HEK293 (cell line): ENCODE measurements at regions of chr11 and their contacts with region 1.

Region 1: DNA sequence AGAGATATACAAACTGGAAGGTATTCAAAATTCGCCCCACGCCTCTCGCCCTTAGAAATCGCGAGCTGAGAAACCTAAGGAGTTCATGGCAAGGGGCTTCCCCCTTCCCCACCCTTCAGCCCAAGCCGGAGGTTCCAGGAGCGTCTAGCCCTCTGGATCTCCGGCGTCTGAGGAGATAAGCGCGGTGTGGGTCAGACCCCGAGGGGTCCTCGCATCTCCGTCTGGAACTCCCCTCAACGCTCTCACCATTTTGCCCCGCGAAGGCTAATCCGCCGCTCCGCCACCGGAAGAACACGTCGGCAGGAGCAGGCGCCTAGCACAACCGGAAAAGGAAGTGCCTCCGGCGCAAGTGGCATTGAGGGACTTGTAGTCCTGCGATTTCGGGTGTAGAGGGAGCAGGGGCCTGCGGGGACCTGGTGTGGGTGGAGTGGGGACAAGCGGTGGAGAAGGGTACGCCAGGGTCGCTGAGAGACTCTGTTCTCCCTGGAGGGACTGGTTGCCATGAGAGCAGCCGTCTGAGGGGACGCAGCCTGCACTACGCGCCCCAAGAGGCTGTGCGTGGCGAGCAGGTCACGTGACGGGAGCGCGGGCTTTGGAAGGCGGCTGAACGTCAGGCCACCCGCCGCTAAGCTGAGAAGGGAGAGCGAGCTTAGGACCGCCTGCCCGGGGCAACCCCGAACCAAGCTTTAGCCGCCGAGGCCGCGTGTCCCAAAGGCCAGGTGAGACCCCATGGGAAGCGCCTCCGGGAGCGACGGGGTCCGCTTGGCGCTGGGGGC is at the starts of genes FEN1 and TMEM258:
- H3K4me3 ChIP-seq: peak within 1 kb of the TSS; percentile 87
- H3K27ac ChIP-seq: peak within 1 kb of the TSS; percentile 89
- H3K4me1 ChIP-seq: 0 out of 2 replicates have a peak, but pooled peaks cover 1% of the 10 kb centered on the region
- CTCF ChIP-seq: no peak

Region 2: DNA sequence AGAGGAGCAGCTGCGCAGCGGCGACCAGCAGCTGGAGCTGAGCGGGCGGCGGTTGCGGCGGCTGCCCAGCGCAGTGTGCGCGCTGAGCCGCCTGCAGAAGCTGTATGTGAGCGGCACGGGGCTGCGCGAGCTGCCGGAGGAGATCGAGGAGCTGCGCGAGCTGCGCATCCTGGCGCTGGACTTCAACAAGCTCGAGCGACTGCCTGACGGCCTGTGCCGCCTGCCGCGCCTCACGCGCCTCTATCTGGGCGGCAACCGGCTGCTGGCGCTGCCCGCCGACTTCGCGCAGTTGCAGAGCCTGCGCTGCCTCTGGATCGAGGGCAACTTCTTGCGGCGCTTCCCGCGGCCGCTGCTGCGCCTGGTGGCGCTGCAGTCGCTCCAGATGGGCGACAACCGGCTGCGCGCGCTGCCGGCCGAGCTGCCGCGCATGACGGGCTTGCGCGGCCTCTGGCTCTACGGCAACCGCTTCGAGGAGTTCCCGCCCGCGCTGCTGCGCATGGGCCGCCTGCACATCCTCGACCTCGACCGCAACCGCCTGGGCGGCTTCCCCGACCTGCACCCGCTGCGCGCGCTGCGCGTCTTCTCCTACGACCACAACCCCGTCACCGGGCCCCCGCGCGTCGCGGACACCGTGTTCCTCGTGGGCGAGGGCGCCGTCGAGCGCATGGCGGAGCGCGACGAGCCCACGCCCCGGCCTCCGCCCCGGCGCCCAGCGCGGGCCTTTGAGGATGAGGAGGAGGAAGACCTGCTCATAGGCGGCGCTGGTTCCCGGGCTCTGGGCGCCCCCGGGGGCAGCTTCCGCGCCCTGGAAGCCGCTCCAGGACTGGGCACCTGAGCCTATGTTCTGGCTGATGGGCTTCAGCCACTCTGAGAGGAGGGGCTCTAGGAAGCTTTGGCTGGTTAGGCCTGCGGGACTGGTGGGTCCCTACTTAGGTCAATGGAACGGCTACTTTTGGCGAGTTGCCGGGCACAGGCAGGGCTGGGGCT is 283.2 kb before region 1 on chr11:
- CTCF ChIA-PET with region 1: no interaction called
- POLR2A ChIA-PET with region 1: no interaction called
- H3K4me3 ChIP-seq: peak overlapping the region; percentile 26
- H3K27ac ChIP-seq: no peak overlapping the region
- H3K4me1 ChIP-seq: no peaks in the 10 kb centered on the region
- CTCF ChIP-seq: peak; percentile 83

Region 3: DNA sequence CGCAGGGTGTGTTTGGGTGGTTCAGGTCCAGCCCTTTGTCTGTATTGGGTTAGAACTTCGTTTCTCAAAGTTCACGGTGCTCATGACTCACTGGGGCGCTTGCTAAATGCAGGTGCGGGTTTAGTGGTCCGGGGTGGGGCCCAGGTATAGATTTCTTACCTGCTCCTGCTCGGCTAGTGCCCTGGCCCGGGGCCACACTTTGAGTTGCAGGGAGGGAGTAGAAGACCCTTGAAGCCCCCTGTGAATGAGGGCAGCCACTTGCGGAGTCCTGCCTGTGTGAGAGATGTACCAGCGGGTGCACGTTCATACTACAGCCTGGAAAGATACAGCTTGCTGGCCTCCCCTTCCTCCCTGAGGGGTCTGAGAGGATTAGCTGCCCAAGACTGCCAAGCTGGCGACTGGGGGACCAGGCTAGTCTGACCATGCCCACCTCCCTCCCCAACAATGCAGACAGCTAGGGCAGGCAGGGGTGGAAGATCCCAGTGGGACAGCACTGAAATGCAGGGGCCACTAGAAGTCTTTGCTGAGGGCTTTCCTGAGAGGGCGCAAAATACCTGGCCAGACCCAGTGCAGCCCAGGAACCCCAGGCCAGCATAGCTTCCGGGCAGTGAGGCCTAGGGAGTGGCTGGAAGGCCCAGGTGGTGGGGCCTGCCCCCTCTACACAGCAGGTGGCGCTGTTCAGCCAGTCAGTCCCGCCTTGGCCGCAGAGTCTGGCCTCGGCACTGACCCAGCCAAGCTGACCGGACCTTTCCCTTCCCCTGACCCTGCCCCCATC is 45.1 kb before region 1 on chr11:
- CTCF ChIA-PET with region 1: interaction called, 118 read pairs
- POLR2A ChIA-PET with region 1: interaction called, 8 read pairs
- H3K4me3 ChIP-seq: no peak overlapping the region
- H3K27ac ChIP-seq: no peak overlapping the region
- H3K4me1 ChIP-seq: no peaks in the 10 kb centered on the region
- CTCF ChIP-seq: peak; percentile 63

Region 4: DNA sequence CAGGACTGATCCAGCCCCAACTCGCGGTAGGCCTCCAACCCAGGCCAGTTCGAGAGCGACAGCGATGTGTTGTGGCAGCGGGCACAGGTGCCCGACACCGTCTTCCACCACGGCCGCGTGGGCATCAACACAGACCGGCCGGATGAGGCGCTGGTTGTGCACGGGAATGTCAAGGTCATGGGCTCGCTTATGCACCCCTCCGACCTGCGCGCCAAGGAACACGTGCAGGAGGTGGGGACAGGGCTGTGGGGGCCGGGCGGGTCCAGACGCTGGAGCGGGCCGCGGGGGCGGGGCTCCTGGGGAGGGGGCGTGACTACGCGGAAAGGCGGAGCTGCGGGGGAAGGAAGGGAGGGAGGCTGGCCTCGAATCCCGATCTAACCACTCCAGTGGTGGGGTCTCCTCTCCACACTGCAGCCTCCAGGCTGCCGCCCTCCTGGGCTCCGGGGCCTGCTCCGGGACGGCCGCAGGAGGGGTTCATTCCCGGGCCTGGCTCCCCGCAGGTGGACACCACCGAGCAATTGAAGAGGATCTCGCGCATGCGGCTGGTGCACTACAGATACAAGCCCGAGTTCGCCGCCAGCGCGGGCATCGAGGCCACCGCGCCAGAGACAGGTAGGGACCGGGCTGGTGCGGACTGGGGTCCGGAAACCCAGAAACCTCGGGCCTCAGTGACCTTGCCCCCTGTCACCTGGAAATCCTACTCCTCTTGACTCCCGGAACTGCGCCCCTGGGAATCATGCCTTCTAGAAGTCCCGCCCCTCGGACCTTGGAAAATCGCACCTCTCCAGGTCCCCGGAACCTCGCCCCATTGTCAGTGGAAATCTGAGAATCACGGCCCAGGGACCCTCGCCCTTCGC is 15.0 kb before region 1 on chr11:
- CTCF ChIA-PET with region 1: interaction called, 13 read pairs
- POLR2A ChIA-PET with region 1: interaction called, 9 read pairs
- H3K4me3 ChIP-seq: no peak overlapping the region
- H3K27ac ChIP-seq: no peak overlapping the region
- H3K4me1 ChIP-seq: no peaks in the 10 kb centered on the region
- CTCF ChIP-seq: no peak

Region 5: GRCh38 chr11:61816736-61817455 is 24.4 kb after region 1 on chr11 and contains the start of gene FADS1:
- CTCF ChIA-PET with region 1: interaction called, 40 read pairs
- POLR2A ChIA-PET with region 1: interaction called, 38 read pairs
- H3K4me3 ChIP-seq: peak within 1 kb of the TSS; percentile 64
- H3K27ac ChIP-seq: peak within 1 kb of the TSS; percentile 76
- H3K4me1 ChIP-seq: no peaks in the 10 kb centered on the region
- CTCF ChIP-seq: peak; percentile 95

Region 6: GRCh38 chr11:61827571-61828378 is 35.3 kb after region 1 on chr11 and contains the start of gene FADS2:
- CTCF ChIA-PET with region 1: interaction called, 13 read pairs
- POLR2A ChIA-PET with region 1: interaction called, 7 read pairs
- H3K4me3 ChIP-seq: peak within 1 kb of the TSS; percentile 62
- H3K27ac ChIP-seq: peak within 1 kb of the TSS; percentile 96
- H3K4me1 ChIP-seq: peaks cover 10% of the 10 kb centered on the region; the same call in 1 of the 2 replicates
- CTCF ChIP-seq: peak; percentile 13; the same call in 1 of the 2 replicates

Region 7: DNA sequence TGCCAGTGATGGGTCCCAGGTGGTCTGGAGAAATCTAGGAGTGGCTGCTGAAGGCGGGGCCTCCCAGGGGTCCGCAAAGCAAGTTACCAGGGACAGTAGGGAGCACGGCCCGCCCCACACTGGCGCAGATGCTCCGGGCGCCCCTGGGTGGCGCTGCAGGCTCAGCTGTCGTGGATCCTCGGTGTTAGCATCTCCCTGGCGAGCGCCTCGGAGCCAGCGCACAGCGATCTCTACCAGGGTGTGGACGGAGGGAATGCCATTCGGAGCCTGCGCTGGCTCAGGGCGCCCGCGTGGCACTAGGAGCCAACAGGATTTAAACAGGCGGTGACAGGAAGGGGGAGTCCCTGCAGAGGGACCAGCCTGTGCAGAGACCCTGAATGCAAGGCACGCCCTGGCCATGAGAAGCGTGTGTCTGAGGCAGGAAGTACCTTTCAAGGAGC is 78.7 kb after region 1 on chr11:
- CTCF ChIA-PET with region 1: interaction called, 20 read pairs
- POLR2A ChIA-PET with region 1: interaction called, 4 read pairs
- H3K4me3 ChIP-seq: no peak overlapping the region
- H3K27ac ChIP-seq: no peak overlapping the region
- H3K4me1 ChIP-seq: no peaks in the 10 kb centered on the region
- CTCF ChIP-seq: peak; percentile 95